ENCODE measurements at regions of chr6 and their contacts with region 1.

Region 1: GRCh38 chr6:20126789-20127653 is 85.2 kb downstream of the MBOAT1 start:
- DNase-seq: no peak
- H3K4me3 ChIP-seq: no peak overlapping the region
- CTCF ChIP-seq: peak; percentile 94

Region 2: DNA sequence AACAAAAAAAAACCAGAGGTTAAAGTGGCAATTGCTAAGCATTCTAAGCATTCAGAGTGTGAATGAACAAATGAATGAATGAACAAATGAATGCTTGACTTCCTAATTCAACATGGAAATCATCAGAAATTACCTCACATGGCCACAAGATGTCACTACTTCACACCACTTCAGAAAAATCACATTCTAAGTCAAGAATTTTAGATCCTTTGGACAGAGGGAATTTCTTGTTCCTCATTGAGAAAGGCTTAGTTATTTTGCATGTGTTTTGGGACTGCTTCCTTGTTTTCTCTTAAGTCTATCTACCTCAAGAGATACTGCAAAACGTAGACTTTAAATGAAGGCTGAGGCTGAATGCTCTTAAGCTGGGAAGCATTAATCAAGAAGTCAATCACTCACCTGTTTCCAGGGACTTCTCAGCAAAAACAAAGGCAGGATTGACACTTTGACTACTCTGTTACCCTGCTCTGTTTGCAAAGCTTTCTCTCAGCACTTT is 34.9 kb before region 1 on chr6:
- CTCF ChIA-PET with region 1: interaction called, 59 read pairs
- POLR2A ChIA-PET with region 1: no interaction called
- DNase-seq: peak; percentile 4
- H3K4me3 ChIP-seq: no peak overlapping the region
- CTCF ChIP-seq: peak; percentile 34

Region 3: GRCh38 chr6:20105838-20106237 is 21.2 kb before region 1 on chr6:
- CTCF ChIA-PET with region 1: interaction called, 16 read pairs
- POLR2A ChIA-PET with region 1: no interaction called
- DNase-seq: no peak
- H3K4me3 ChIP-seq: no peak overlapping the region
- CTCF ChIP-seq: no peak

Region 4: DNA sequence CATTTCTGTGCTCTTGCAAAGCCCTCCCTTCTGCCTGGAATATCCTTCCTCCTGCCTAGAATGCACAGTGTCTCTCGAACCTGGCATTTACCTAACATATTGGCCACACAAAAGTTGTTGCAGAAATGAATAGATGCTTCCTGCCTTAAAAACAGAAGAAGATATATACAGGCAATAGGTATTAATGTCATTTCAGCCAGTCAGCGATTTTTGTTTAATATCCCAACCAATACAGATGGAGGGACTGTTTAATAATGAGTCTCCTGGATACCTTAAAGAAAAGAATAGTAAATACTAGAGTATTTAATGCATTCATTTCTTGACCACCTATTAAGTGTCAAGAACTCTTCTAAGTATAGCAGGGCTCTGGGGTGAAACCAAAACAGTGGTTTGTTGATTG is 14.9 kb after region 1 on chr6:
- CTCF ChIA-PET with region 1: interaction called, 28 read pairs
- POLR2A ChIA-PET with region 1: no interaction called
- DNase-seq: no peak
- H3K4me3 ChIP-seq: no peak overlapping the region
- CTCF ChIP-seq: no peak

Region 5: DNA sequence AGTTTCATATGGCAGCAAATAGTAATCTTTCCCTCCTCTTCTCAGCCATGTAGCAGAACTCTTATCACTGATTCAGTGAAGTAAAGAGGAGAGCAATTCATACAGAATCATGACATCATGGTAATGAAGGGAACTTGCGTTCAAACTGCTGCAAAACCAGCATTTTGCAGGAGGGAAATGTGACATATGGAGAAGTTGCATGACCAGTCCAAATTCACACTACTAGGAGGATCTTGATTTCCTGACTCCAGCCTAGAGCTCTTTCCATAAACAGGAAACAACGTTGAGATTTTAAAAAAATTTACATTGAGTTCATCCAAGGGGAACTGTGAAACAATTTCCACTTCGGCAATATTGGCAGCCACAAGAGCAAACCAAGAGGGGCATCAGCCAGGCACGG is 21.4 kb after region 1 on chr6:
- CTCF ChIA-PET with region 1: interaction called, 11 read pairs
- POLR2A ChIA-PET with region 1: no interaction called
- DNase-seq: no peak
- H3K4me3 ChIP-seq: no peak overlapping the region
- CTCF ChIP-seq: no peak

Region 6: DNA sequence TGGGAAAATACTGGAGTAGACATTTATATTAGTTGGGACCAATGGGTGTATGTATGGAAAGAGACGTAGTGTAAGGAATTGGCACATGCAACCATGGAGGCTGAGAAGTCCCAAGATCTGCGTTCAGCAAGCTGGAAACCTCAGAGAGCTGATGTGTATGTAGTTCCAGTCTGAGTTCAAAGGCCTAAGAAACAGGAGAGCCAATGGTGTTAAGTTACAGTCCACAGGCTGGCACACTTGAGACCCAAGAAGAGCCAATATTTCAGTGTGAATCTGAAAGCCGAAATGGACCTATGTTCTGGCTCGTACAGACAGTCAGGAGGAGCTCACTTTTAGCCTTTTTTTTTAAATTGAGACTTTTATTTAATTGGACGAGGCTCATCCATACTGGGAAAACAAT is 651.4 kb after region 1 on chr6:
- CTCF ChIA-PET with region 1: no interaction called
- POLR2A ChIA-PET with region 1: no interaction called
- DNase-seq: no peak
- H3K4me3 ChIP-seq: no peak overlapping the region
- CTCF ChIP-seq: no peak